ENCODE measurements at regions of chr14 and their contacts with region 1.

Region 1: DNA sequence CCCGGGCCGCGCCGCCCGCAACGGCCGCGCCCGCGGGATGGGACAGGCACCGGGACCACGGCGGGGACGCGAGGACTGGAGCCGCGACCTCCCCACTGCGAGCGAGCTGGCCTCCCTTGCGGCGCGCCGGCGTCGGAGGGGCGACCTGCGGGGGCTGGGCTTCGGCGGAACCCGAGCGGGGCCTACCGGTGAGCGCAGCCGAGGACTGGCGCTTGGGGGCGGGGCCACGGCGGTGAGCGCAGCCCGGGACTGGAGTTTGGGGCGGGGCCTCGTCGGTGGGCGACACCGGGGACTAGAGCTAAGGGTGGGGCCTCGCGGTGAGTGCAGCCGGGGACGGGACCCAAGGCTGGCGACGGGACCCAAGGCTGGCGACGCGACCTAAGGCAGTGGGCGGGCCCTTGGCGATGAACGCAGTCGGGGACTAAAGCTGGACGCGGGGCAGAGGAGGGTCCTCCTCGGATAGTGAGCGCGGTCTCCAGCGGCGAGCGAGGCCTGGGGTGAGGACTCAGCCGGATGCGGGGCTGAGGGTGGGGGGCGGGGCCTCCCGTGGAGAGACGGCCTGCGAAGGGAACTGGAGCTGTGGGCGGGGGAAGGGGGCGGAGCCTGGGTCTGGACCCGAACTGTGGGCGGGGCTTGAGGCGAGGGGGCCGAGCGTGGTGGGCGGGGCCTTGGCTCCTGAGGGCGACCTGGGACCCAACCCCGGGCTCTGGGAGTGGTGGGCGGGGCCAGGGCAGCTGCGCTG is at the start of gene BRF1:
- DNase-seq: peak; percentile 99
- H3K4me3 Mint-ChIP-seq: peak within 1 kb of the TSS; percentile 84
- H3K27ac Mint-ChIP-seq: peak within 1 kb of the TSS; percentile 93
- H3K4me1 Mint-ChIP-seq: peaks cover 27% of the 10 kb centered on the region
- H3K27me3 Mint-ChIP-seq: no peaks in the 10 kb centered on the region
- total RNA-seq, gene BRF1: 25.5 to 27.4 TPM

Region 2: GRCh38 chr14:105314287-105315200 is 13.6 kb after region 1 on chr14 and contains the start of gene PACS2:
- CTCF ChIA-PET with region 1: interaction called, 5 read pairs
- POLR2A ChIA-PET with region 1: interaction called, 34 read pairs
- intact Hi-C with region 1: loop called (anchors 1 kb)
- DNase-seq: peak; percentile 79
- H3K4me3 Mint-ChIP-seq: peak within 1 kb of the TSS; percentile 84
- H3K27ac Mint-ChIP-seq: peak within 1 kb of the TSS; percentile 54
- H3K4me1 Mint-ChIP-seq: peaks cover 33% of the 10 kb centered on the region
- H3K27me3 Mint-ChIP-seq: no peaks in the 10 kb centered on the region
- total RNA-seq, gene PACS2: 32.3 to 36.6 TPM

Measured in activated CD4-positive, alpha-beta memory T cell treated with anti-CD3 and anti-CD28 coated beads for 36 hours (primary cell).